BJ (cell line): ENCODE measurements at regions of chr1 and their contacts with region 1.

Region 1: DNA sequence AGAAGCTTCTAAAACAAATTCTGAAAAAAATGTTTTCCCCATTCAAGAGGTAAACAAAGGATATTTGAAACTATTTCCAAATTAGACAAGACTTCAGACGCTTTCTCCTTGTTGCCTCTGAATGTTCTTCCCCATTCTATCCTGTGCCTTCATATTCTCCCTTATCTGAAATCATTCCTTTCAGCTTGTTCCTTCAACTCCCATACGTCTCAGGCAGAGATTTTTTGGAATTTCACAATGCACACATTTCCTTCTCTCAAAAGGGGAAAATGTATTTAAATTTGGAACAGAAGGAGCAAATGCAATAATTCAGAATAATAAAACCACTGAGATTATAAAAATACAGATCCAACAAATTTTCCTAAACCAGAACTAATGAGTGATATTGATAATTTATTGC is 198.7 kb upstream of the IVNS1ABP start:
- DNase-seq: no peak
- H3K4me3 ChIP-seq: no peak overlapping the region
- H3K27me3 ChIP-seq: no peaks in the 10 kb centered on the region
- CTCF ChIP-seq: no peak

Region 2: GRCh38 chr1:185500001-185500626 is 15.6 kb before region 1 on chr1:
- CTCF ChIA-PET with region 1: interaction called, 10 read pairs
- POLR2A ChIA-PET with region 1: no interaction called
- DNase-seq: peak; percentile 84
- H3K4me3 ChIP-seq: no peak overlapping the region
- H3K27me3 ChIP-seq: no peaks in the 10 kb centered on the region
- CTCF ChIP-seq: no peak

Region 3: DNA sequence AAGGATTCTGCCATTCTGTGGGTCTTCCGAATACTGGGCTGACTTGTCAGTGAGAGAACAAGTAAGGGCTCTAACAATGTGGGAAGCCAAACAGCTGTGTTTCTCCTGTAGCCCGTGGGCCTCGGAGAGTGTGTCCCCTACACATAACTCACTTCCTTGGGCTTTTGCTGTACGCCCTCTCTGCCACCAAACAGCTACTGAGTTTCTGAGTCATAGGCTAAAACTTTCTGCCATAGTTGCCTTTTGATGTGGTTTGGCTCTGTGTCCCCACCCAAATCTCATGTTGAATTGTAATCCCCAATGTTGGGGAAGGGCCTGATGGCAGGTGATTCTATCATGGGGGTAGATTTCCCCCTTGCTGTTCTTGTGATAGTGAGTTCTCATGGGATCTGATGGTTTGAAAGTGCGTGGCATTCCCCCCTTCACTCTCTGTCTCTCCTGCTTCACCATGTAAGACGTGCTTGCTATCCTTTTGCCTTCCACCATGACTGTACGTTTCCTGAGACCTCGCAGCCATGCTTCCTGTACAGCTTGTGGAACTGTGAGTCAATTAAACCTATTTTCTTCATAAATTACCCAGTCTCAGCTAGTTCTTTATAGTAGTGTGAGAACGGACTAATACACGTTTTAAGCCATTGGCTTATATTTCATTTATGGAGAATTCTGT is 23.7 kb after region 1 on chr1:
- CTCF ChIA-PET with region 1: no interaction called
- POLR2A ChIA-PET with region 1: no interaction called
- DNase-seq: no peak
- H3K4me3 ChIP-seq: no peak overlapping the region
- H3K27me3 ChIP-seq: no peaks in the 10 kb centered on the region
- CTCF ChIP-seq: no peak